SK-N-SH (cell line): ENCODE measurements at regions of chr9 and their contacts with region 1.

Region 1: DNA sequence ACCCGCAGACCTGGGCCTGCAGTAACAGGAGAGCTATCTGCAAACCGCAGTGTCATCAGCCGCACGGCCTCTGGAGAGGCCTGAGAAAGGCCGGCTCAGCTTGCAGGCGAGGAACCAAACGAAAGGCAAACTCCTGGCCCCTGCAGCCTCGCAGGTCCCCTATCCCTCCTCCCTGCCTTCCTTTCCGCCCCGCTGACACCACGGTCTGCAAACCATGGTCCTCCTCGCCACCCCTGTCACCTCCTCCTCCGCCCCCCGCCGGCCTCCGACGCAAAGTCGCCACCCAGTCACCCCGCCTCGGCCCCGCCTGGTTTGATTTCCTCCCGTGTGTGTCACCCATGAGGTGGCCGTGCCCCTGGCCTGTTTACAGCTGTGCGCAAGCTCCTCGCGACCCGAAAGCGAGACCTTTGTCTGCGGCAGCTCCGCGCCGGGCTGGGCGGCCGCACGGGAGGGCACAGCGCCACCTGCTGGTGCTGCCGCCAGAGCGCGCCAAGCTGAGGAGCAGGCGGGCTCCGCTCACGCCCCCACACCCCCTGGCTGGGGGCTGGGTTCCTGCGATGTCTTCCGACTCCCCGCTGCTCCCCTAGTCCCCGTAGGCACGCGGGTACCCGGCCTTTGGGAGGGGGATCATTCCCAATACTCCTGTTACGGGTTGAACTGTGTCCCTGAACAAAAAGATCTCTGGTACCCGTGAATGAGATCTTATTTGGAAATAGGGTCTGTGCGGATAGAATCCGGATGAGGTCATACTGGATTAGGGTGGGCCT is 19.4 kb downstream of the GBGT1 start:
- DNase-seq: peak; percentile 90
- H3K4me3 ChIP-seq: peak overlapping the region; percentile 29 to 51
- H3K27ac ChIP-seq: peak overlapping the region in 1 of 2 experiments; percentile 58; a peak in 2 of 4 replicates
- H3K4me1 ChIP-seq: peaks cover 0 to 67% of the 10 kb centered on the region in 2 experiments; a peak in 3 of 4 replicates
- H3K27me3 ChIP-seq: no peaks in the 10 kb centered on the region
- CTCF ChIP-seq: peak; percentile 97
- EP300 ChIP-seq: no peak
- RAD21 ChIP-seq: peak; percentile 75

Region 2: DNA sequence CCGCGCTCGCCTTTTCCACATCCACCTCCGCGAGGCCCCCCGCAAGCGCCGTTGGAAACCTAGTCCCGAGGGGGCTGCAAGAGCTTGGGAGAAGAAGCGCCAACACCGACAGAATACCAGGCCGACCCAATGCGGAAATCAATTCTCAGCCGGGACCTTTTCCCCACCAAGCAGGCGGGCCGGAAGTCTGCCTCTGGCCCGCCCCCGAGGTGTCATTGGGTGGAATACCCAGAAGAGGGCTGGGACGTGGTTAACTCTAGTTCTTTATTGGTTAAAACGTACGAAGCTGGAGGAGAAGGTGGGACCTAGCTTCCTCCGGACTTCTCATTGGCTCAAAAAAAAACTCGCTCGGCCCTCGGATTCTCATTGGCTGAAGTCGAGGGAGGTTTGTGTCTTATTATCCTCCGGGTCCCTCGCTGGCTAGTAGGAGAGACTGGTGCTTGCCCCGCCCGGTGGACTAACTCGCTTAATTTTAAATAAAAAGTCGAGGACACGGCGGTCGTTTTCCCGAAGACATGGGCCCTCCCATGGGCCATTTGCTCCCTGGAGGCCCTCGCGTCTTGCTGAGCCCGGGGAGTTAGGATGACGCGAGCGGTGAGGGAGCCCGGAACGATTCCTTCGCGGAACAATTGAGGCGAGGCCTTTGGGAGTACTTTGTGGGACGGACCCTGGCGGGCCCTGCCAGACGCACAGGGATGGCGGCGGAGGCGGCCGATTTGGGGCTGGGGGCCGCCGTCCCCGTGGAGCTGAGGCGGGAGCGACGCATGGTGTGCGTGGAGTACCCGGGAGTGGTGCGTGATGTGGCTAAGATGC is 113.8 kb before region 1 on chr9 and contains the start of gene GTF3C5:
- CTCF ChIA-PET with region 1: interaction called, 216 read pairs
- POLR2A ChIA-PET with region 1: interaction called, 10 read pairs
- DNase-seq: peak; percentile 98
- H3K4me3 ChIP-seq: peak within 1 kb of the TSS; percentile 89 to 97
- H3K27ac ChIP-seq: peak within 1 kb of the TSS; percentile 82 to 96
- H3K4me1 ChIP-seq: peaks cover 10 to 13% of the 10 kb centered on the region in 2 experiments; a peak in 2 of 4 replicates
- H3K27me3 ChIP-seq: no peaks in the 10 kb centered on the region
- CTCF ChIP-seq: no peak
- EP300 ChIP-seq: no peak
- RAD21 ChIP-seq: no peak
- polyA plus RNA-seq, gene GTF3C5: 57.3 and 59.1 TPM in 2 replicates

Region 3: GRCh38 chr9:133048569-133048968 is 95.8 kb before region 1 on chr9:
- CTCF ChIA-PET with region 1: interaction called, 109 read pairs
- POLR2A ChIA-PET with region 1: no interaction called
- DNase-seq: peak; percentile 58
- H3K4me3 ChIP-seq: no peak overlapping the region
- H3K27ac ChIP-seq: no peak overlapping the region
- H3K4me1 ChIP-seq: no peaks in the 10 kb centered on the region
- H3K27me3 ChIP-seq: no peaks in the 10 kb centered on the region
- CTCF ChIP-seq: peak; percentile 35; the same call in 1 of the 2 replicates
- EP300 ChIP-seq: no peak
- RAD21 ChIP-seq: peak; percentile 43

Region 4: DNA sequence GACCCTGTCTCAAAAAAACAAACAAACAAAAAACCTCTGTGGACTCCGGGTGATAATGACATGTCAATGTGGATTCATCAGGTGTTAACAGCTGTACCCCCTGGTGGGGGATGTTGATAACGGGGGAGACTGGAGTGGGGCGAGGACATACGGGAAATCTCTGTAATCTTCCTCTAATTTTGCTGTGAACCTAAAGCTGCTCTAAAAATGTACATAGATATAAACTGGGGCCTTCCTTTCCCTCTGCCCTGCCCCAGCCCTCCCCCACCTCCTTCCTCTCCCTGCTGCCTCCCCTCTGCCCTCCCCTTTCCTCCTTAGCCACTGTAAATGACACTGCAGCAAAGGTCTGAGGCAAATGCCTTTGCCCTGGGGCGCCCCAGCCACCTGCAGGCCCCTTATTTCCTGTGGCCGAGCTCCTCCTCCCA is 83.9 kb before region 1 on chr9:
- CTCF ChIA-PET with region 1: interaction called, 28 read pairs
- POLR2A ChIA-PET with region 1: no interaction called
- DNase-seq: peak; percentile 24
- H3K4me3 ChIP-seq: no peak overlapping the region
- H3K27ac ChIP-seq: peak overlapping the region in 1 of 2 experiments; percentile 31; a peak in 1 of 4 replicates
- H3K4me1 ChIP-seq: peaks cover 0 to 26% of the 10 kb centered on the region in 2 experiments; a peak in 1 of 4 replicates
- H3K27me3 ChIP-seq: no peaks in the 10 kb centered on the region
- CTCF ChIP-seq: no peak
- EP300 ChIP-seq: no peak
- RAD21 ChIP-seq: no peak

Region 5: DNA sequence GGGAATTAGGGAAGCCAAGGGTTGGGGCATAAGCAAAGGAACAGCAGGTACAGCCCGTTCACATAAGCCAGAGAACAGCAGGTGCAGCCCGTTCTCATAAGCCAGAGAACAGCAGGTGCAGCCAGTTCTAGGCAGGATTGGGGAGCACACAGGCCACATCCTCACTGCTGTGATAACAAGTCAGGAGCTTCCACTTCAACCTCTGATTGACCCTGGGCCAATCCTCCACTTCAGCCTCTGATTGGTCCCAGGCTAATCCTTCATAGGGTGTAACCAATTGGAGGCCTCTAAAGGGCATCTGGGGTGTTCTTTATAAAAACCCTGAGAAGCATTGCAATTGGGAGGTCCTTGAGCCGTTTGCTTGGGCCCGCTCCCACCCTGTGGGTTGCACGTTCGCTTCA is 55.0 kb before region 1 on chr9:
- CTCF ChIA-PET with region 1: interaction called, 810 read pairs
- POLR2A ChIA-PET with region 1: no interaction called
- DNase-seq: no peak
- H3K4me3 ChIP-seq: no peak overlapping the region
- H3K27ac ChIP-seq: peak overlapping the region in 1 of 2 experiments; percentile 14; a peak in 1 of 4 replicates
- H3K4me1 ChIP-seq: peaks cover 0 to 36% of the 10 kb centered on the region in 2 experiments; a peak in 2 of 4 replicates
- H3K27me3 ChIP-seq: no peaks in the 10 kb centered on the region
- CTCF ChIP-seq: no peak
- EP300 ChIP-seq: no peak
- RAD21 ChIP-seq: no peak

Region 6: GRCh38 chr9:133115448-133116345 is 28.6 kb before region 1 on chr9:
- CTCF ChIA-PET with region 1: interaction called, 810 read pairs
- POLR2A ChIA-PET with region 1: interaction called, 21 read pairs
- DNase-seq: no peak
- H3K4me3 ChIP-seq: no peak overlapping the region
- H3K27ac ChIP-seq: peak overlapping the region in 1 of 2 experiments; percentile 99; a peak in 2 of 4 replicates
- H3K4me1 ChIP-seq: peaks cover 22 to 84% of the 10 kb centered on the region in 2 experiments
- H3K27me3 ChIP-seq: no peaks in the 10 kb centered on the region
- CTCF ChIP-seq: no peak
- EP300 ChIP-seq: no peak
- RAD21 ChIP-seq: no peak

Region 7: GRCh38 chr9:133121198-133121939 is 23.0 kb before region 1 on chr9 and contains the start of gene RALGDS:
- CTCF ChIA-PET with region 1: interaction called, 810 read pairs
- POLR2A ChIA-PET with region 1: interaction called, 21 read pairs
- DNase-seq: peak; percentile 97
- H3K4me3 ChIP-seq: peak within 1 kb of the TSS; percentile 71 to 79
- H3K27ac ChIP-seq: peak within 1 kb of the TSS in 1 of 2 experiments; percentile 99; a peak in 3 of 4 replicates
- H3K4me1 ChIP-seq: peaks cover 18 to 65% of the 10 kb centered on the region in 2 experiments
- H3K27me3 ChIP-seq: no peaks in the 10 kb centered on the region
- CTCF ChIP-seq: no peak
- EP300 ChIP-seq: no peak
- RAD21 ChIP-seq: no peak
- polyA plus RNA-seq, gene RALGDS: 64.1 and 64.7 TPM in 2 replicates

Region 8: DNA sequence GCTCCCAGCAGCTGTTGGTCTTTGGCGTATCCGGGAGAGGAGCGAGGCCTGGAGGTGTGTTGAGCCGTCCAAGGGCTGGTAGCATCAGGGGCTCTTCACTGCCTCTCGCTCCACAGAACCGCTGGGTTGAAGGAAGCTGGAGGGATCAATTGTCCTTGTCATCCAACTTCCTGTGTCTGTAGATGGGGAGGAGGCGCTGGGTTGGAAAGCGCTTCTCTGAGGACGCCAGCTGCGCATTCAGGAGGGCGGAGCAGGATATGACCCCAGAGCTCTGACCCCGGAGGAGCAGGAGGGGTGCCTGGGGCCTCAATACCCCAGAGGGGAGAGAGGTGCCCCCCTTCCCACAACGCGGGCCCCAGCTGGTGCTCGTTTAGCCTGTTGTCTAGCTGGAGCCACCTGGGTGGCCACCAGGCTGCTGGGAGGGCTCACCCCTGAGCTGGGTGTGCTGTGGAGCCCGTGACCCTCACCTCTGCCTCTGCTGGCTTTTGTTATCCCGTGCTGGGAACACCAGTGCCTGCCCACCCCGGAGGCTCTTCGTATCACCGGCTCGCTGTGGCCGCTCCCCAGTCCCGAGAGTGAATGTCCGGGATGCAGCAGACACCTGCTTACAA is 489.9 kb after region 1 on chr9:
- CTCF ChIA-PET with region 1: no interaction called
- POLR2A ChIA-PET with region 1: no interaction called
- DNase-seq: no peak
- H3K4me3 ChIP-seq: no peak overlapping the region
- H3K27ac ChIP-seq: peak overlapping the region in 1 of 2 experiments; percentile 100; a peak in 2 of 4 replicates
- H3K4me1 ChIP-seq: peaks cover 0 to 69% of the 10 kb centered on the region in 2 experiments; a peak in 2 of 4 replicates
- H3K27me3 ChIP-seq: peaks cover 37% of the 10 kb centered on the region
- CTCF ChIP-seq: no peak
- EP300 ChIP-seq: no peak
- RAD21 ChIP-seq: no peak

Region 9: GRCh38 chr9:134040781-134041648 is 896.7 kb after region 1 on chr9:
- CTCF ChIA-PET with region 1: no interaction called
- POLR2A ChIA-PET with region 1: no interaction called
- DNase-seq: peak; percentile 86
- H3K4me3 ChIP-seq: no peak overlapping the region
- H3K27ac ChIP-seq: peak overlapping the region in 1 of 2 experiments; percentile 56; a peak in 1 of 4 replicates
- H3K4me1 ChIP-seq: peaks cover 0 to 18% of the 10 kb centered on the region in 2 experiments; a peak in 1 of 4 replicates
- H3K27me3 ChIP-seq: no peaks in the 10 kb centered on the region
- CTCF ChIP-seq: no peak
- EP300 ChIP-seq: no peak
- RAD21 ChIP-seq: no peak